Thyroid gland (tissue), 4 donors: ENCODE measurements at regions of chr20 and their contacts with region 1.

Region 1: DNA sequence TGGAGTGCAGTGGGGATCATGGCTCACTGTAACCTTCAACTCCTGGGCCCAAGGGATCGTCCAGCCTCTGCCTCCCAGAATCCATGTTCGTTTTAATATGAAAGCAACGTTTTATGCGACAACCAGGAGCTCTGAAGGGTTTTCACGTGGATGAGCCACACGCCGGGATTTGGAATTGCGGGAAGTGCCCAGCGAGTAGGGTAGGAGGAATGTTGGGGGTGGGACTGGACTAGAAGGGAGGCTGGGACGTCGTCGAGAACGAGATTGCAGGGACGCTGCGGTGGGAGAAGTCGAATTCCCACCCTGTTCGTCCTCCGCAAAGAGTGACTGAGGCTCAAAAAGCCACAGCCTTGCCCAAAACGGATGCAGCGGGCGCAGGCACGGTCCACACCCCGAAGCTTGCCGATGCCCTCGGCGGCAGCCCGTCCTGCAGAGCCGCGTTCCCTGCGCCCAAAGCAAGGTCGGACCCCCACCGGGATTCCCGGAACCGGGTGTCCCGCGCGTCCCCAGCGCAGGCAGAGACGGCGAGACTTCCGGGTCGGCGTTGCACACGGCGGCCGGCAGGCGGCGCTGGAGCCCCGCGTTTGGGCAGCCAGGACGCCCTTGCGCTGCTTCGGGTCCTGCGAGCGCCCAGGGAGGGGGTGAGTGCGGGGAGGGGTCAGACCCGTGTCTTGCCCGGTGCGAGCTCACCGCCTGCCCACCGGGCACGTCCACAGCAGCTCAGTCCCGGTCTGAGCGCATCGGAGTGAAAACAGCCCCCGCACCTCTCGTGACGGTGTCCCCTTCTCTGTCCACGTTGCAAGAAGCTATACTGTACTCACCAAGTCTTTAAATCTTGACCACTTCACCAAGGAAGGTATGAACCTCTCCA is 87.8 kb downstream of the DHX35 start:
- DNase-seq: peak; percentile 75
- H3K4me3 ChIP-seq: peak overlapping the region; percentile 13 to 49 (median 34)
- H3K27ac ChIP-seq: peak overlapping the region in 2 of 3 donors; percentile 47 to 50
- H3K4me1 ChIP-seq: peaks cover 3 to 4% of the 10 kb centered on the region in 2 donors
- H3K27me3 ChIP-seq: no peaks in the 10 kb centered on the region
- CTCF ChIP-seq: peak; percentile 69 to 99 (median 95)
- POLR2A ChIP-seq: peak in 1 of 2 donors; percentile 28

Region 2: GRCh38 chr20:38617011-38617829 is 432.7 kb before region 1 on chr20:
- intact Hi-C with region 1: no loop called
- DNase-seq: peak; percentile 35 to 46
- H3K4me3 ChIP-seq: no peak overlapping the region
- H3K27ac ChIP-seq: no peak overlapping the region
- H3K4me1 ChIP-seq: peaks cover 0 to 5% of the 10 kb centered on the region in 2 donors
- H3K27me3 ChIP-seq: no peaks in the 10 kb centered on the region
- CTCF ChIP-seq: no peak
- POLR2A ChIP-seq: no peak

Region 3: GRCh38 chr20:38926142-38926933 is 123.6 kb before region 1 on chr20 and contains the start of gene FAM83D:
- intact Hi-C with region 1: loop called (anchors 5 kb)
- DNase-seq: peak; percentile 88 to 93
- H3K4me3 ChIP-seq: peak within 1 kb of the TSS in 2 of 3 donors; percentile 29 to 51
- H3K27ac ChIP-seq: no peak within 1 kb of the TSS
- H3K4me1 ChIP-seq: peaks cover 7 to 13% of the 10 kb centered on the region in 2 donors
- H3K27me3 ChIP-seq: no peaks in the 10 kb centered on the region
- CTCF ChIP-seq: peak in 1 of 6 experiments; percentile 50
- POLR2A ChIP-seq: peak in 1 of 2 donors; percentile 72
- total RNA-seq, gene FAM83D: 0.67 to 3.4 (median 0.86) TPM

Region 4: DNA sequence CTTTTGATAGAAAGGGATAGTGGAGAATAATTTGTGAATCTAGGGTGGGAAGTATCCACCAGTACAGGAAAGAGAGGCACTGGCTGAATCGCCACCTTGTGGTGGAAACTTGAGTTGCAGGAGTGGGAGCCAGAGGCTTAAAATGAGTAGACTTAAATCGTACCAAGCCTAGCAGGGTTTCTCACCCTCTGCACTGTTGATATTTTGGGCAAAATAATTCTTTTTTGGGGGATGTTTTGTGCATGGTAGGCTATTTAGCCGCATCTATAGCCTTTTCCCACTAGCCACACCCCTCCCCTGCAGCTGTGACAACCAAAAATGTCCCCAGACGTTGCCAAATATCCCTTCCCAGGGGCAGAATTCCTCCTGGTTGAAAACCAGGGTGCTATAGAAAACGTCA is 31.3 kb after region 1 on chr20:
- intact Hi-C with region 1: loop called (anchors 5 kb)
- DNase-seq: peak; percentile 77 to 83
- H3K4me3 ChIP-seq: no peak overlapping the region
- H3K27ac ChIP-seq: no peak overlapping the region
- H3K4me1 ChIP-seq: no peaks in the 10 kb centered on the region
- H3K27me3 ChIP-seq: no peaks in the 10 kb centered on the region
- CTCF ChIP-seq: peak; percentile 69 to 91 (median 75)
- POLR2A ChIP-seq: no peak

Region 5: DNA sequence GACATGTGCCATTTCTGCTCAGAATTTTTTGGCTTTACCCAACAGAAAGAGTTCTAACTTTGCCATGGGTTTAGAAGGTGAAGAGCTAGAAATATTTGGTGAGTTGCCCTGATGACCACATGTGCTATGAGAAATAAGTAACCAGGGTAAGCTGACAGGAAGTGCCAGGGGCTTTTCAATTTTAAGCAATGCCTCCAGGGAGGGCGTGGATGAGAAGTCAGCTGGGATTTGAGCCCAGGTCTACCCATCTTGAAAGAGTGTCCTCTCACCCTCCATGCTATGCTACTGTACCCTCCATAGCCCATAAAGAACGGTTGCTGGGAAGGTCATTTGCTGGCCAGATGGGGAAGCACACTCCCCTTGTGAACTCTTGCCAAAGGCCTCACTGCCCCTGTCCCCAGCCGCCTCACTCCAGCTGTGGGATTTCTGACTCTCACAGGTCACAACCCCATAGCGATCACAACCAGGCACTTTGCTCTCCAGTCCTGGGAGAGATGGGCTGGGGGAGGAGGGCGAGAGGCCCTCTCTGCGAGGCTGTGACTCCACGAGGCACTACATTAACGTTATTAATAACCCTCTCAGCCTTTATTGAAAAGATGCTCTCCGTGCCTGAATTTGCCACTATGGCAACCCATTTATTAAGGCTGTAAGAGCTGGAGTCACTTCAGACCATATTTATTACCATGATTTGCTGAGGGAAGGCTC is 203.3 kb after region 1 on chr20:
- intact Hi-C with region 1: no loop called
- DNase-seq: no peak
- H3K4me3 ChIP-seq: no peak overlapping the region
- H3K27ac ChIP-seq: no peak overlapping the region
- H3K4me1 ChIP-seq: no peaks in the 10 kb centered on the region
- H3K27me3 ChIP-seq: no peaks in the 10 kb centered on the region
- CTCF ChIP-seq: no peak
- POLR2A ChIP-seq: no peak